ENCODE measurements at regions of chr16 and their contacts with region 1.

Region 1: DNA sequence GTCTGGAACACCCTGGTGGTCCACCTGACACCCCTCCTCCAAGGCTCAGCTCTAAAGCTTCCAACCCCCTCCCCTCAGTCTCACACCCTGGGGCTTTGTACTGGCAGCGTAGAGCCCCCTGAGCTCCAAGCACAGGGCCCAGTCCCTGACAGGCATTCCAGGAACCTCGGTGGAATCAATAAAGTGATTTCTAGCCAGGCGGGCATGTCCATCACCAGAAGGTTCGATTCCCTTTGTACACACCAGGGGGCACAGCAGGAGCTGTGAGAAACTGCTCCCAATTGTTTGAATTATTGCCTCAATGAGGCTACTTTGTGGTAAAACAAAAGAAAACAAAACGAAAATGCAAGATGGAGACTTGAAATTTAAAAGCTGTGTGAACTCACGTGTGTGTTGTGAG is 51.8 kb downstream of the SMPD3 start:
- DNase-seq: no peak
- ATAC-seq: no peak
- H3K4me3 ChIP-seq: no peak overlapping the region
- H3K27ac ChIP-seq: no peak overlapping the region
- H3K4me1 ChIP-seq: no peaks in the 10 kb centered on the region
- H3K27me3 ChIP-seq: no peaks in the 10 kb centered on the region
- CTCF ChIP-seq: peak in 4 of 5 experiments; percentile 3 to 41 (median 24)
- POLR2A ChIP-seq: no peak

Region 2: DNA sequence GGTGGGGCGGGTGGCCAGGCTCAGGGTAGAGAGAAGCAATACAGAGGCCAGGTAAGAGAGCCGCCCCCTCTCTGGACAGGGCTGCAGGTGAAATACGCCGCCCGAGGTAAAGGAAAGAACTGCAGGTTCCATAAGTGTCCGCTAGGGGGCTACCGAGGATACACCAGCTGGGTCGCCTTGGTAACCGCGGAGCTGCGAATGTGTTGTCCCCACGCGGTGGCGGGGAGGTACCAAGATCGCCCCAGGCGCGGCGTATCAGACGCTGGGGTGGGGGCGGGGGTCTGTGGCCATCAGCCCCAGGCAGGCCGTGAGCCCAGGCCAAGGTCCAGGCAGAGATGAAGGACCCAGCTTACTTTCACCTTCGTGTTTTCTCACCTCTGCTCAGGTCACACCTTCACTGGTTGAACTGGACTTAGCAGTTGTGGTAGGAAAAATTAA is 124.2 kb after region 1 on chr16:
- in situ Hi-C with region 1: loop called in 1 of 4 experiments (anchors 25 kb)
- intact Hi-C with region 1: no loop called
- DNase-seq: peak; percentile 51 to 70
- ATAC-seq: peak; percentile 88 to 89
- H3K4me3 ChIP-seq: peak overlapping the region in 3 of 4 donors; percentile 39 to 45 (median 44)
- H3K27ac ChIP-seq: no peak overlapping the region
- H3K4me1 ChIP-seq: peaks cover 0 to 4% of the 10 kb centered on the region in 2 donors
- H3K27me3 ChIP-seq: no peaks in the 10 kb centered on the region
- CTCF ChIP-seq: peak; percentile 76 to 95 (median 87)
- POLR2A ChIP-seq: no peak

Measured in gastrocnemius medialis (tissue), 4 donors.